ENCODE measurements at regions of chr9 and their contacts with region 1.

Region 1: GRCh38 chr9:130343445-130343918 is 77.9 kb downstream of the HMCN2 start:
- ATAC-seq: peak; percentile 25 to 71 (median 44)
- H3K4me3 ChIP-seq: no peak overlapping the region
- H3K27ac ChIP-seq: no peak overlapping the region
- H3K4me1 ChIP-seq: peaks cover 12 to 14% of the 10 kb centered on the region in 2 donors

Region 2: DNA sequence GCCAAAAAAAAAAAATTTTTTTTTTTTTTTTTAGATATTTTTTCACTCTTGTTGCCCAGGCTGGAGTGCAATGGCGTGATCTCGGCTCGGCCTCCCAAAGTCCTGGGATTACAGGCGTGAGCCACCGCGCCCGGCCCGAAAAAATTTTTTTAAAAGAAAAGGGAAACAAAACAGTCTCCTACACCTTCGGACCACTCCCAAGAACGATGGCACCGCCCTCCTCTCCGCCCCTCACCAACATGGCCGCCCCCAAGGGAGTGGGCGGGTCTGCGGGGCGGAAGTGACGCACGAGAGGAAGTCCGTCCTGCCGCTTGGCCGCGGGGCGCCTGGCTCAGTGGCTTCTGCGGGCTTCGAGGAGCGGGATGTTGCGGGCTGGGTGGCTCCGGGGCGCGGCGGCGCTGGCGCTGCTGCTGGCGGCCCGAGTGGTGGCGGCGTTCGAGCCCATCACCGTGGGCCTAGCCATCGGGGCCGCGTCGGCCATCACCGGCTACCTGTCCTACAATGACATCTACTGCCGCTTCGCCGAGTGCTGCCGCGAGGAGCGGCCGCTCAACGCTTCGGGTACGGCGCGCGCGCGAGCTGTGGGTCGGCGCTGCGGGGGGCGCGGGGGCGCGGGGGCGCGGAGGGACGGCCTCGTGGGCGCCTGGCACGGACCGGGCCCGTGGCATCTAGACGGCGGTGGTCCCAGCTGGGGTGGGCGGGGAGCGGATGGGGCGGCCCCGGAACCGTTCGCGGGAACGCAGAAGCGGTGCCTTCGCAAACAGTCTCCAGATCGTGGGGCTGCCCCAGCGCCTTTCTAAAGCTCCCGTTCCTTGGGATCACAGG is 540.4 kb before region 1 on chr9 and contains the start of gene TOR1B:
- in situ Hi-C with region 1: no loop called
- ATAC-seq: peak; percentile 93 to 97 (median 94)
- H3K4me3 ChIP-seq: peak within 1 kb of the TSS; percentile 59 to 96 (median 80)
- H3K27ac ChIP-seq: peak within 1 kb of the TSS; percentile 24 to 59
- H3K4me1 ChIP-seq: peaks cover 6 to 7% of the 10 kb centered on the region in 2 donors
- total RNA-seq, gene TOR1B: 10.7 to 31.4 (median 14.6) TPM

Region 3: DNA sequence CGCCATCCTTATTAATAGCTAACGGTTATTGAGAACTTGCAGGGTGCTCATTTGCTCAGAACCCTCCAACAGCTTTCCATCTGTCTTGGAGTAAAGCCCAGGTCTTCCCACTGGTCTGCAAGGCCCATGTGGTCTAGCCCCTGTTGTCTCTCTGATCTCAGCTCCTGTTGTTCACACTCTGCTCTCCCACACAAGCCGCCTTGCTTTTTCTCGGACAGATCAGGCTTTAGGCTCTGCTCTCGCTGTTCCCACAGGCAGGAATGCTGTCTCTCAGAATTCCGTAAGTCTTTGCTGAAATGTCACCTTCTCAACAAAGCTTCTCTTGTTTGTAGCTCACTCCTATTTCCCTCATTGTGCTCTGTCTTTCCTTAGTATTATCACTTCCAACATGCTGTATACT is 255.4 kb before region 1 on chr9:
- in situ Hi-C with region 1: no loop called
- ATAC-seq: no peak
- H3K4me3 ChIP-seq: no peak overlapping the region
- H3K27ac ChIP-seq: no peak overlapping the region
- H3K4me1 ChIP-seq: no peaks in the 10 kb centered on the region

Region 4: GRCh38 chr9:130118841-130119518 is 224.5 kb before region 1 on chr9:
- in situ Hi-C with region 1: loop called in 3 of 9 experiments (anchors 10 to 25 kb)
- ATAC-seq: peak; percentile 93 to 96 (median 94)
- H3K4me3 ChIP-seq: no peak overlapping the region
- H3K27ac ChIP-seq: peak overlapping the region; percentile 59 to 69
- H3K4me1 ChIP-seq: peaks cover 32 to 37% of the 10 kb centered on the region in 2 donors

Region 5: GRCh38 chr9:130874783-130875182 is 531.3 kb after region 1 on chr9:
- in situ Hi-C with region 1: no loop called
- ATAC-seq: no peak
- H3K4me3 ChIP-seq: no peak overlapping the region
- H3K27ac ChIP-seq: peak overlapping the region; percentile 39 to 47
- H3K4me1 ChIP-seq: no peaks in the 10 kb centered on the region

Measured in motor neuron (in vitro differentiated cells).